ENCODE measurements at regions of chr15 and their contacts with region 1.

Region 1: GRCh38 chr15:78422571-78423340 is 15.3 kb upstream of the IREB2 start:
- DNase-seq: peak; percentile 66 to 86
- ATAC-seq: peak; percentile 80
- H3K4me3 ChIP-seq: no peak overlapping the region
- H3K27ac ChIP-seq: no peak overlapping the region
- H3K4me1 ChIP-seq: no peaks in the 10 kb centered on the region
- H3K27me3 ChIP-seq: no peaks in the 10 kb centered on the region

Region 2: GRCh38 chr15:78308422-78309032 is 114.2 kb before region 1 on chr15:
- intact Hi-C with region 1: loop called in 1 of 2 experiments (anchors 10 kb)
- DNase-seq: peak in 1 of 2 donors; percentile 67
- ATAC-seq: peak; percentile 69
- H3K4me3 ChIP-seq: no peak overlapping the region
- H3K27ac ChIP-seq: no peak overlapping the region
- H3K4me1 ChIP-seq: no peaks in the 10 kb centered on the region
- H3K27me3 ChIP-seq: no peaks in the 10 kb centered on the region

Region 3: DNA sequence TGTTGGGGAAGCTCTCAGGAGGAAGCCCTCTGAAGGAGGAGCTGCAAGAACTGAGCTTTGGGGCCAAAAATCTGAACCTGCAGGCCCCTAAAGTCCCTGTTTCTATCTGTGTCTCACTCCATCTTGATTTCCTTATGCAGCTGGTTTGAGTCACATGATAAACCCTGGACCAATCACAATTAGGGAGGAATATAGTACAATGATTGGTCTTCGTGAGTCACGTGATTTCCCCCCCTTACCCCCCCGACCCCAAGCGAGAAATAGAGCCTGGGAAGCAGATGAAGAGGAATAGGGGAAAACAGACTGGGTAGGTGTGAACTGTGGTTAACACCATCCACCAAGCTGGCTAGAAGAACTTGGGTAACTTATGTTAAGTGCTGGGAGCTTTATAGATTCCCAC is 69.7 kb before region 1 on chr15:
- intact Hi-C with region 1: no loop called
- DNase-seq: no peak
- ATAC-seq: no peak
- H3K4me3 ChIP-seq: no peak overlapping the region
- H3K27ac ChIP-seq: no peak overlapping the region
- H3K4me1 ChIP-seq: no peaks in the 10 kb centered on the region
- H3K27me3 ChIP-seq: no peaks in the 10 kb centered on the region